ENCODE measurements at regions of chr12 and their contacts with region 1.

Region 1: GRCh38 chr12:76790564-76791552 is 26.9 kb downstream of the ZDHHC17 start:
- DNase-seq: peak; percentile 46
- H3K4me3 ChIP-seq: no peak overlapping the region
- H3K27ac ChIP-seq: no peak overlapping the region
- H3K4me1 ChIP-seq: peaks cover 5% of the 10 kb centered on the region
- H3K27me3 ChIP-seq: no peaks in the 10 kb centered on the region

Region 2: GRCh38 chr12:76611533-76611932 is 179.3 kb before region 1 on chr12:
- in situ Hi-C with region 1: loop called (anchors 10 kb)
- DNase-seq: peak; percentile 96
- H3K4me3 ChIP-seq: no peak overlapping the region
- H3K27ac ChIP-seq: peak overlapping the region; percentile 80
- H3K4me1 ChIP-seq: peaks cover 14% of the 10 kb centered on the region
- H3K27me3 ChIP-seq: no peaks in the 10 kb centered on the region

Measured in GM23248 (cell line).